ENCODE measurements at regions of chr12 and their contacts with region 1.

Region 1: GRCh38 chr12:103482365-103482764 is 13.4 kb downstream of the C12orf42 start:
- DNase-seq: peak in 1 of 9 experiments; percentile 26
- ATAC-seq: no peak
- H3K4me3 ChIP-seq: peak overlapping the region in 1 of 2 experiments; percentile 38
- H3K4me3 Mint-ChIP-seq: peak overlapping the region; percentile 72
- H3K27ac ChIP-seq: peak overlapping the region in 1 of 2 experiments; percentile 47
- H3K27ac Mint-ChIP-seq: peak overlapping the region; percentile 82
- H3K4me1 ChIP-seq: no peaks in the 10 kb centered on the region
- H3K4me1 Mint-ChIP-seq: peaks cover 7% of the 10 kb centered on the region
- H3K27me3 ChIP-seq: no peaks in the 10 kb centered on the region
- H3K27me3 Mint-ChIP-seq: no peaks in the 10 kb centered on the region
- CTCF ChIP-seq: no peak

Region 2: GRCh38 chr12:103348935-103349334 is 133.4 kb before region 1 on chr12:
- CTCF ChIA-PET with region 1: no interaction called
- POLR2A ChIA-PET with region 1: no interaction called
- intact Hi-C with region 1: no loop called
- DNase-seq: peak in 1 of 9 experiments; percentile 5
- ATAC-seq: no peak
- H3K4me3 ChIP-seq: no peak overlapping the region
- H3K4me3 Mint-ChIP-seq: no peak overlapping the region
- H3K27ac ChIP-seq: no peak overlapping the region
- H3K27ac Mint-ChIP-seq: peak overlapping the region; percentile 46
- H3K4me1 ChIP-seq: no peaks in the 10 kb centered on the region
- H3K4me1 Mint-ChIP-seq: peaks cover 10% of the 10 kb centered on the region
- H3K27me3 ChIP-seq: no peaks in the 10 kb centered on the region
- H3K27me3 Mint-ChIP-seq: no peaks in the 10 kb centered on the region
- CTCF ChIP-seq: no peak

Region 3: DNA sequence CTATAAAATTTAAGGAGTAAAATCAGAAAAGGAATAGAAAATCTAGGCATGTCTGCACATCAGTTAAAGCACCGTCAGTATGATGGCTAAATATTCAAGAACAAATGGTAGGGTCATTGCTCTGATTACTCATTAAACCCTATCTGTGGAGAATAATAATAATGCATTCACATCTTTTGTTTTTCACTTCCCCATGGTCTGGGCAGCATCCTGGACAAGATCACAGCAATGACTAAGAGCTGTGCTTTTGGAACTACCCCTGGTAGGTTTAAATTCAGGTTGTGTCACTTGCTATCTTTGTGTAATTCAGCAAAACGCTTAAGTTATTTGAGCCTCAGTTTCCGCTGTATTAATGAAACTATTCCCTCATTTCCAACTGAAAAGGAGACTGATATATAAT is 19.7 kb before region 1 on chr12:
- CTCF ChIA-PET with region 1: no interaction called
- POLR2A ChIA-PET with region 1: no interaction called
- intact Hi-C with region 1: loop called in 1 of 2 experiments (anchors 1 kb)
- DNase-seq: no peak
- ATAC-seq: no peak
- H3K4me3 ChIP-seq: no peak overlapping the region
- H3K4me3 Mint-ChIP-seq: no peak overlapping the region
- H3K27ac ChIP-seq: no peak overlapping the region
- H3K27ac Mint-ChIP-seq: no peak overlapping the region
- H3K4me1 ChIP-seq: no peaks in the 10 kb centered on the region
- H3K4me1 Mint-ChIP-seq: no peaks in the 10 kb centered on the region
- H3K27me3 ChIP-seq: no peaks in the 10 kb centered on the region
- H3K27me3 Mint-ChIP-seq: no peaks in the 10 kb centered on the region
- CTCF ChIP-seq: no peak

Region 4: GRCh38 chr12:103503977-103504376 is 21.6 kb after region 1 on chr12:
- CTCF ChIA-PET with region 1: no interaction called
- POLR2A ChIA-PET with region 1: no interaction called
- intact Hi-C with region 1: no loop called
- DNase-seq: peak; percentile 39 to 78 (median 65)
- ATAC-seq: peak; percentile 73
- H3K4me3 ChIP-seq: no peak overlapping the region
- H3K4me3 Mint-ChIP-seq: no peak overlapping the region
- H3K27ac ChIP-seq: no peak overlapping the region
- H3K27ac Mint-ChIP-seq: no peak overlapping the region
- H3K4me1 ChIP-seq: no peaks in the 10 kb centered on the region
- H3K4me1 Mint-ChIP-seq: peaks cover 4% of the 10 kb centered on the region
- H3K27me3 ChIP-seq: no peaks in the 10 kb centered on the region
- H3K27me3 Mint-ChIP-seq: no peaks in the 10 kb centered on the region
- CTCF ChIP-seq: peak; percentile 61

Region 5: DNA sequence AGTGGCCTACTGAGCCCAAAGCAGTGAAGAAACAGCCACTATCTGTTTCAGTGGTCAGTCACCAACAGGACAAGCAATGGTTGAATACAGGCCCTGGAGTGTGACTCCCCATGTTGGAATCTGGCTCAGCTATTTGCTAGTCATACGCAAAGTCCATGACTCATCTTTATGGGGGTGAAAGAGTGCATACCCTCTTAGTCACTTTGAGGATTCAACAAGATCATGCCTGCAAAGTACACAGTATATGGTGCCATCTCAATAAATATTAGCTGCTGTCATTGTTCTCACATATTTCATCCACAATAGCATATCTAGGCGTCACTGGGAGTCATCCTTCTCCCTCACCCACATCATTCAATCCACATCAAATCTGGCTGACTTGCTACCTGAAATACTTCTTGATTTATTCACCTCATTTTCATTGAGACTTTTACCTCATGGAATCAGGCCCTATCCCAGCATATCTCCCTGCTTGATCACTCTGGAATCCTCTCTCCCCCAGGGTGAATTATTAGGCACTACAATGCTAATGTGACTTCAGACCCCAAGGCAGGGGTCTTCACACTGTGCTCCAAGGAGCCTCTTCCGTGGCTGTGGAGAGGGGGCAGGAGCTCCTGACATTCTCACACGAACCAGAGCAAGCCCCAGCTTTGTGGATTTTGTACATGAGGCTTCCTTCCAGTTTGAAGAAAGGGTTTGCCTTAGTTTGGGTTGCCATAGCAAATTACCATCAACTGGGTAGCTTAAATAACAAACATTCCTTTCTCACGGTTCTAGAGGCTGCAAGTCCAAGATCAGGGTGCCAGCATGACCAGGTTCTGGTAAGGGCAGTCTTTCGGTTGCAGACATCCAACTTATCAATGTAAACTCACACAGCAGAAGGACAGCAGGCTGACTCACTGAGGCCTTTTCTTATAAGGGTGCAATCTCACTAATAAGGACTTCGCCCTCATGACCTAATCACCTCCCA is 78.5 kb after region 1 on chr12:
- CTCF ChIA-PET with region 1: no interaction called
- POLR2A ChIA-PET with region 1: no interaction called
- intact Hi-C with region 1: no loop called
- DNase-seq: no peak
- ATAC-seq: no peak
- H3K4me3 ChIP-seq: no peak overlapping the region
- H3K4me3 Mint-ChIP-seq: no peak overlapping the region
- H3K27ac ChIP-seq: no peak overlapping the region
- H3K27ac Mint-ChIP-seq: no peak overlapping the region
- H3K4me1 ChIP-seq: no peaks in the 10 kb centered on the region
- H3K4me1 Mint-ChIP-seq: no peaks in the 10 kb centered on the region
- H3K27me3 ChIP-seq: no peaks in the 10 kb centered on the region
- H3K27me3 Mint-ChIP-seq: peaks cover 20% of the 10 kb centered on the region
- CTCF ChIP-seq: no peak

Region 6: DNA sequence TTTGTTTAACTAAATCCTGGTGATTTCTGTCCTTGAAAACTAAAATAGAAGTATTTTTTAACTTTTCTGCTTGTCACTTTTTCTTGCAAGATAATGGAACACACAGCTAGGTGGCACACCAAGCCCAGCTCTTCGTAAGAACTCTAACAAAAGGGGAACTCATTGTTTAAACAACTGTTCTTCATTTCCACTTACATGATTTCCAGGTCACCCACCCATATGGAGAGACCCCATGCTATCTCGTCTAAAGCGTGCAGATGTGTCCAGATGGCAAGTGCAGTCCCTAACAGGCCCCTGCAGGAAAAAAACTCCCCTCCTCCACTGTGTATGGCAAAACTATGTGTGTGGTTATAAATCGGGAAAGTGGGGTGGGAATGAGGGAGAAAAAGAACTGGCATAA is 402.0 kb after region 1 on chr12:
- CTCF ChIA-PET with region 1: no interaction called
- POLR2A ChIA-PET with region 1: no interaction called
- intact Hi-C with region 1: no loop called
- DNase-seq: peak; percentile 10 to 76 (median 43)
- ATAC-seq: peak; percentile 67
- H3K4me3 ChIP-seq: no peak overlapping the region
- H3K4me3 Mint-ChIP-seq: no peak overlapping the region
- H3K27ac ChIP-seq: no peak overlapping the region
- H3K27ac Mint-ChIP-seq: no peak overlapping the region
- H3K4me1 ChIP-seq: peaks cover 11% of the 10 kb centered on the region
- H3K4me1 Mint-ChIP-seq: peaks cover 32% of the 10 kb centered on the region
- H3K27me3 ChIP-seq: no peaks in the 10 kb centered on the region
- H3K27me3 Mint-ChIP-seq: no peaks in the 10 kb centered on the region
- CTCF ChIP-seq: peak; percentile 71